ENCODE measurements at regions of chr14 and their contacts with region 1.

Region 1: DNA sequence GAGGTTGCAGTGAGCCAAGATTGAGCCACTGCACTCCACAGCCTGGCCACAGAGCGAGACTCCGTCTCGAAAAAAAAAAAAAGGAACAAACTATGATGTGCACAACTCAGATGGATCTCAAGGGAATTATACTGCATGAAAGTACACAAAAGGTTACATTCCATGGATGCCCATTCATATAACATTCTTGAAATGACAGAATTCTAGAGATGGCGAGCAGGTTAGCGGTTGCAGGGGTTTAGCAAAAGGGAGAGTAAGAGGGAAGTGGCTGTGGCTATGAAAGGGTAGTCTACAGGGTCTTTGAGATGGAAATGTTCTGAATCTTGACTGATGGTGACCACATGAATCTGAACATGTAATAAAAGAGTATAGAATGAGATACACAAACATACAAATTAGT is 49.7 kb downstream of the CKB start:
- DNase-seq: no peak
- ATAC-seq: no peak
- H3K4me3 ChIP-seq: no peak overlapping the region
- H3K4me3 Mint-ChIP-seq: no peak overlapping the region
- H3K27ac ChIP-seq: no peak overlapping the region
- H3K27ac Mint-ChIP-seq: no peak overlapping the region
- H3K4me1 ChIP-seq: no peaks in the 10 kb centered on the region
- H3K4me1 Mint-ChIP-seq: no peaks in the 10 kb centered on the region
- H3K27me3 ChIP-seq: no peaks in the 10 kb centered on the region
- H3K27me3 Mint-ChIP-seq: no peaks in the 10 kb centered on the region

Region 2: GRCh38 chr14:103260620-103261124 is 212.3 kb before region 1 on chr14:
- CTCF ChIA-PET with region 1: no interaction called
- POLR2A ChIA-PET with region 1: no interaction called
- DNase-seq: no peak
- ATAC-seq: no peak
- H3K4me3 ChIP-seq: peak overlapping the region in 1 of 2 donors; percentile 36
- H3K4me3 Mint-ChIP-seq: peak overlapping the region; percentile 50 to 70 (median 54)
- H3K27ac ChIP-seq: no peak overlapping the region
- H3K27ac Mint-ChIP-seq: no peak overlapping the region
- H3K4me1 ChIP-seq: peaks cover 0 to 4% of the 10 kb centered on the region in 2 experiments
- H3K4me1 Mint-ChIP-seq: peaks cover 7 to 12% (median 11%) of the 10 kb centered on the region in 3 donors
- H3K27me3 ChIP-seq: peaks cover 0 to 16% of the 10 kb centered on the region in 2 experiments
- H3K27me3 Mint-ChIP-seq: peaks cover 17 to 25% of the 10 kb centered on the region in 2 donors

Region 3: GRCh38 chr14:103500148-103500990 is 27.4 kb after region 1 on chr14:
- CTCF ChIA-PET with region 1: interaction called in 1 of 2 experiments, 10 read pairs
- POLR2A ChIA-PET with region 1: no interaction called
- DNase-seq: peak; percentile 37 to 87 (median 74)
- ATAC-seq: peak; percentile 83 to 89 (median 86)
- H3K4me3 ChIP-seq: no peak overlapping the region
- H3K4me3 Mint-ChIP-seq: no peak overlapping the region
- H3K27ac ChIP-seq: no peak overlapping the region
- H3K27ac Mint-ChIP-seq: peak overlapping the region in 1 of 2 donors; percentile 29
- H3K4me1 ChIP-seq: peaks cover 0 to 8% of the 10 kb centered on the region in 2 experiments
- H3K4me1 Mint-ChIP-seq: peaks cover 9 to 10% (median 10%) of the 10 kb centered on the region in 3 donors
- H3K27me3 ChIP-seq: no peaks in the 10 kb centered on the region
- H3K27me3 Mint-ChIP-seq: no peaks in the 10 kb centered on the region

Region 4: GRCh38 chr14:104554608-104555429 is 1081.9 kb after region 1 on chr14:
- CTCF ChIA-PET with region 1: no interaction called
- POLR2A ChIA-PET with region 1: no interaction called
- DNase-seq: peak in 1 of 35 experiments; percentile 1
- ATAC-seq: no peak
- H3K4me3 ChIP-seq: no peak overlapping the region
- H3K4me3 Mint-ChIP-seq: no peak overlapping the region
- H3K27ac ChIP-seq: no peak overlapping the region
- H3K27ac Mint-ChIP-seq: no peak overlapping the region
- H3K4me1 ChIP-seq: no peaks in the 10 kb centered on the region
- H3K4me1 Mint-ChIP-seq: no peaks in the 10 kb centered on the region
- H3K27me3 ChIP-seq: peaks cover 0 to 45% of the 10 kb centered on the region in 2 experiments
- H3K27me3 Mint-ChIP-seq: peaks cover 3 to 26% of the 10 kb centered on the region in 2 donors

Measured in T-cell (primary cell).